Activated B cell treated with CpG ODN at 0.5 μM for 24 hours (primary cell): ENCODE measurements at regions of chr10 and their contacts with region 1.

Region 1: DNA sequence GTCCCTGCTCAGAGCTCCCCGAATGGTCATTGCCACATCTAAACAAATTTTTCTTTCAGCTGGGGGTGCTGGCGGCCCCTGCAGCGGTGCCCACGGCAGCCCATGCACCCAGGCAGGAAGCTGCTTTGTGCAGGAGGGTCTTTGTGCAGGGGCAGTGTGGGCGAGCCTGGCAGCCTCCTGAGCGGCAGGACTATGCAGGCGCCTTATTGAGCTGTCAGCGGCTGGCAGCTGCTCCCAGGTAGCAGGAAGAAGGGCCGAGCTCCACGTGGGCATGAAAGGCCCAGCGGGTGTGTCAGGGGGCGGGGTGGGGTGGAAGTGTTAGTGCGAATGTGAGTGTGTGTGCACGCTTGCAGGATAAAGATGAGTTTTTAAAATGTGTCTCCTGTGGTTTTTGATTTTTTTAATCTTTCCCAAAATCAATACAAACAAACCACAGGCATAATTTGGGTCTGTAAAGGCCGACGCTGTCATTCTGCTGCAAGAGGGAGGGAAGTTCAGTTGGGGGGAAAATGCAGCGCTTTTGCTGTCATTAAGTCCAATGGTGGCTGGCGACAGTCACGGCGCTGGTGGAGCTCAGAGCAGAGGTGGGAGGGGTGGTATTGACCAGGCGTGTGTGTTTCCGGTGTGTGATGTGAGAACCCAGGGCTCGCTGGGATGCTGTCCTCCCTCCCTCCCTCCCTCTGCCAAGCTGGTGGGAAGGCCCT is 83.9 kb downstream of the LHPP start:
- DNase-seq: no peak
- ATAC-seq: peak; percentile 7
- H3K4me3 Mint-ChIP-seq: peak overlapping the region; percentile 62
- H3K27ac Mint-ChIP-seq: peak overlapping the region; percentile 77
- H3K4me1 Mint-ChIP-seq: peaks cover 93% of the 10 kb centered on the region
- H3K27me3 Mint-ChIP-seq: no peaks in the 10 kb centered on the region
- CTCF ChIP-seq: no peak

Region 2: DNA sequence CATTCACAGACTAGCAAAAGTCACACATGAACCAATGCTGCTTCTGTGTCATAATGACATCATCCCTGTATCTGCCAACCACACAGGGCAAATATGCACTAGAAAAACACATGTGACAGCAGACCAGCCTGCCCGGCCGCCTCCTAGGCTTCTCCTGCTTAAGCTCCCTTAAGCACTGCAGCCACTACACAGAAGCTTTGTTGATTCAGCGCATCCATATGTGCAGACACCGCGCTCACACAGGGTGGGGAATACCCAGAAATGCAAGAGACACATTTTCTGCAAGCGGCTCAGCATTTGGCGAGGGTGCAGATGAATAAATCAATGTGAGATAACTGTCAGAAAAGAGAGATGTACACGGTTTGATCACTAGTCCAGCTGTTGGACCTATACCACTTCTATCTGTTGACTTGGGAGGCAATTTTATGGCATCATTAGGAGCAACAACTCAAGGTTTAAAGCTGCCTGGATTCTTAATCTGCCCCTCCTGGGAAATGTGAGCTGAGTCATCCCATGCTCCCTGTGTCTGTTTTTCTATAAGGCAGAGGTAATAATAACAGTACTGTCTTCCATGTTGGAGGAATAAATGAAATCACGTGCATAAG is 687.3 kb before region 1 on chr10:
- CTCF ChIA-PET with region 1: no interaction called
- POLR2A ChIA-PET with region 1: no interaction called
- intact Hi-C with region 1: no loop called
- DNase-seq: no peak
- ATAC-seq: no peak
- H3K4me3 Mint-ChIP-seq: no peak overlapping the region
- H3K27ac Mint-ChIP-seq: no peak overlapping the region
- H3K4me1 Mint-ChIP-seq: no peaks in the 10 kb centered on the region
- H3K27me3 Mint-ChIP-seq: peaks cover 4% of the 10 kb centered on the region
- CTCF ChIP-seq: no peak

Region 3: DNA sequence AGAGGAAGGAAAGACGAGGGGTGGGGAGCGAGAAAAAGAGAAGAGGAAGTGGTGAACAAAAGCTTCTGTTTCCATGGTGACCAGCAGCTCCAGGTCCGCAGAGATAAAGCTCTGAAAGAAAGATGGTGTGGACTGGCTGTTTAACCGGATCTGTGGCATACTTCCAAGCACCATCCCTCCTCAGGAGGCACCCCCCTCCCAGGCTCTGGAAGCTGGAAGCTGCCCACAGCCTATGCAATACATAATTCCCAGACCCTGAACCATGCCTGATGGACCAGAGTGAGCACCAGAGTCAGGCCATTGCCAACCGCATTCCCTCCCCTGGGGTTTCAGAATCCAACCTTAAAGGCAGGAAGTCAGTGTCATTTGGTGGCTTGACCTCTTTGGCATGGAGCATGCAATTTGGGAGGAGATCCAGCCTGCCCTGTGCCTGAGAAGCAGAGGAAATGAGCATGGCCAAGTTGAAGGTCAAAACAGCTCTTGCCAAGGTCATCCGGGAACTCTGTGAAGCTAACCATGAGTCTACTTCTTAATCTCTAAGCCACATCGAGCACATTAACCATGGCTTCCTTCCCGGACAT is 631.7 kb before region 1 on chr10:
- CTCF ChIA-PET with region 1: no interaction called
- POLR2A ChIA-PET with region 1: no interaction called
- intact Hi-C with region 1: no loop called
- DNase-seq: no peak
- ATAC-seq: no peak
- H3K4me3 Mint-ChIP-seq: no peak overlapping the region
- H3K27ac Mint-ChIP-seq: no peak overlapping the region
- H3K4me1 Mint-ChIP-seq: peaks cover 6% of the 10 kb centered on the region
- H3K27me3 Mint-ChIP-seq: peaks cover 52% of the 10 kb centered on the region
- CTCF ChIP-seq: no peak

Region 4: DNA sequence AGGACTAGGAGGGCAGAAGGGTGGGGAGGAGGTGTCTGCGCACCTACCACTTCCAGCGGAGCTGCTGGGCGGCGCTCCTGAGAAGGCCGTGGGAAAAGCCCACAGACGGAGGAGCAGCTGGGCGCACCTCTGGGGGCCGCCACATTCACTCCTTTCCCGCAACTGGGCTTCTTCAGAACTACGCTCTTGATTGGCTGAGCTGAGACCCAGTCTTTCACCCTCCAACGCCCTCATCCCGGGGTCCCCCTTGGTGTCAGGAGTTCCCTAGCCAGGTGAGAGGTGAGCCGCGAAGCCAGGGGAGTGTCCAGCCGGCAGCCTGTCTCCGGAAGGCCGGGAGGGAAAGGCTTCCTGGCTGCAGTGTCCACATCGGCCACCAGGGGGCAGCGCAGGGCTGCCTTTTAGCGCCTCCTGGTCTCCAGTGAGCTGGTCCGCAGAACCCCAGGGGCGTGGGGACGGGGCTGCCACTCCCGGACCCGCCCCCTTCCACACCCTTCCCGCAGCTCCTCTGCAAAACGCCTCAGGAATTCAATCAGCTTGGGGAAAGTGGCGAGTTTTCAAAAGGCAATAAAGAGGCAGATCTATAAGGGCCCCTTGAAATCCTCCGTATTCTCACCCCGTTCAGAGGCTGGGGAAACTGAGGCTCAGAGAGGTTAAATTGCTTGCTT is 551.0 kb before region 1 on chr10:
- CTCF ChIA-PET with region 1: no interaction called
- POLR2A ChIA-PET with region 1: no interaction called
- intact Hi-C with region 1: no loop called
- DNase-seq: peak; percentile 89
- ATAC-seq: peak; percentile 85
- H3K4me3 Mint-ChIP-seq: peak overlapping the region; percentile 73
- H3K27ac Mint-ChIP-seq: no peak overlapping the region
- H3K4me1 Mint-ChIP-seq: peaks cover 42% of the 10 kb centered on the region
- H3K27me3 Mint-ChIP-seq: peaks cover 38% of the 10 kb centered on the region
- CTCF ChIP-seq: peak; percentile 91

Region 5: GRCh38 chr10:124323111-124323886 is 222.2 kb before region 1 on chr10:
- CTCF ChIA-PET with region 1: no interaction called
- POLR2A ChIA-PET with region 1: no interaction called
- intact Hi-C with region 1: no loop called
- DNase-seq: no peak
- ATAC-seq: no peak
- H3K4me3 Mint-ChIP-seq: no peak overlapping the region
- H3K27ac Mint-ChIP-seq: no peak overlapping the region
- H3K4me1 Mint-ChIP-seq: no peaks in the 10 kb centered on the region
- H3K27me3 Mint-ChIP-seq: peaks cover 2% of the 10 kb centered on the region
- CTCF ChIP-seq: no peak

Region 6: DNA sequence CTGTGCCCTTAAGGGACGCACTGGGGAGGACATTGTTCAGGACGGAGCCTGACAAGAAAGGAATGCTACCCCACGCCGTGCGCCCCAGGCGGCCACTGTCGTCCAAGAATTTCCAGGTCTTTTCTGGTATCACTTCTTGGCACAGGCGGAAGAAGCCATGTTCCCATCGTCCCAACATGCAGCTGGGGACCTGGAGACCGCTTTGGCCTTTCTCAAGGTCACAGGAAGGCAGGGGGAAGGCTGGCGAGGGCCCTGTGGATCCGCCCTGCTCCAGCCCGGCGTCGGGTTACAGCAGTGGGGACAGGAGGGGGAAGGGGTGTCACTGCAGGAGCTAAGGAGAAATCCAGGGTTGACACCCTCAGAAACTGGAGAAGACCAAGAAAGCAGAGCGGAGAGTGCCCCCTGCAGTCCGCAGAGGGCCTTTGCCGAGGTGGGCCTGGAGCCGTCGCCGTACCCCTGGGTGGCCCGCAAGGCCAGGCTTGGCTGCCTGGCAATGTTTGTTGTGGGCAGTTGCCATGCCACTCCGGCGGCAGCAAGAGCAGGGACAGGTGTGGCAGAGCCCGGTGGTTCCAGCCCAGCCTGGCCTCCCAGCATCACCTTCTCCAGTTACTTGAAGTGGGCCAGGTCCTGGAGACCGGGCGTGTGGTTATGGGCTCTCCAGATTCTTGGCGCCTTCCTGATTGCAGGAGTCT is 20.2 kb after region 1 on chr10:
- CTCF ChIA-PET with region 1: interaction called, 4 read pairs
- POLR2A ChIA-PET with region 1: interaction called, 5 read pairs
- intact Hi-C with region 1: loop called (anchors 2 kb)
- DNase-seq: no peak
- ATAC-seq: peak; percentile 30
- H3K4me3 Mint-ChIP-seq: no peak overlapping the region
- H3K27ac Mint-ChIP-seq: no peak overlapping the region
- H3K4me1 Mint-ChIP-seq: peaks cover 54% of the 10 kb centered on the region
- H3K27me3 Mint-ChIP-seq: no peaks in the 10 kb centered on the region
- CTCF ChIP-seq: no peak